ENCODE measurements at regions of chr9 and their contacts with region 1.

Region 1: GRCh38 chr9:83047973-83048772 is 14.8 kb downstream of the RASEF start:
- DNase-seq: no peak

Region 2: DNA sequence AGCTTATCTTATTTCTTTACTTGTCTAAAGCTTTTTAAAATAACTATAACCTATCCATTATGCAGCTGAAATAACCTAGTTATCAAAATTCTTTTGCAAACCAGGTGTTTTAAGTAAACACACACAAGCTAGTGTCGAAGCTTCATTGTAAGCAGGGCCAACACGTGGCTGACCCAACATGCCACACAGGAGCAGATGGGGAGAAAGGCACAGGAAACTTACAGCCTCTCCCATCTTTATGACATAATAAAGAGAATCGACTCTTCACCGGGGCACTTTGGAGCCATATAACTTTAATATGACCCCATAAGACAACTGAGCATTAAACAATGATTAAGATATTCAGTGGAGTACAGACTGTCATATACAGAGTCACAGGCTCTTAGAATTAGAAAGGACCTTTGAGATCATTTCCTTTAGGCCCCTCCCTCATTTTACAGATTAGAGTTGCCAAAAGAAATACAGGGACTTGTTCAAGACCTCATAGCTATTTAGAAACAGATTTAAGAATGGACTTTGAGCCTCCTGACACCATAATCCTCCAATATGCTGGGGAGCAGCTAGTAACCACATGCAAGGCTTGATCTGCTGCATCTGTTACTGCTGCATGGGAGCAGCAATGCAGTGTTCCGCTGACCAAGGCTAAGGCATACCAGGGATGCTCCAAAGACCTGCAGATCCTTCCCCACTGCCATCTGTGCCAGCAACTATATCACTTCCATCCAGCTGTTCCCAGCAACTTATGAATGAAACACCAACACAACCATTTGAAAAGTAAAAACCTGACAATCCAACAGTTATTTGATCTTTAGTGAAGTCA is 60.6 kb before region 1 on chr9:
- intact Hi-C with region 1: loop called (anchors 10 kb)
- DNase-seq: no peak

Region 3: DNA sequence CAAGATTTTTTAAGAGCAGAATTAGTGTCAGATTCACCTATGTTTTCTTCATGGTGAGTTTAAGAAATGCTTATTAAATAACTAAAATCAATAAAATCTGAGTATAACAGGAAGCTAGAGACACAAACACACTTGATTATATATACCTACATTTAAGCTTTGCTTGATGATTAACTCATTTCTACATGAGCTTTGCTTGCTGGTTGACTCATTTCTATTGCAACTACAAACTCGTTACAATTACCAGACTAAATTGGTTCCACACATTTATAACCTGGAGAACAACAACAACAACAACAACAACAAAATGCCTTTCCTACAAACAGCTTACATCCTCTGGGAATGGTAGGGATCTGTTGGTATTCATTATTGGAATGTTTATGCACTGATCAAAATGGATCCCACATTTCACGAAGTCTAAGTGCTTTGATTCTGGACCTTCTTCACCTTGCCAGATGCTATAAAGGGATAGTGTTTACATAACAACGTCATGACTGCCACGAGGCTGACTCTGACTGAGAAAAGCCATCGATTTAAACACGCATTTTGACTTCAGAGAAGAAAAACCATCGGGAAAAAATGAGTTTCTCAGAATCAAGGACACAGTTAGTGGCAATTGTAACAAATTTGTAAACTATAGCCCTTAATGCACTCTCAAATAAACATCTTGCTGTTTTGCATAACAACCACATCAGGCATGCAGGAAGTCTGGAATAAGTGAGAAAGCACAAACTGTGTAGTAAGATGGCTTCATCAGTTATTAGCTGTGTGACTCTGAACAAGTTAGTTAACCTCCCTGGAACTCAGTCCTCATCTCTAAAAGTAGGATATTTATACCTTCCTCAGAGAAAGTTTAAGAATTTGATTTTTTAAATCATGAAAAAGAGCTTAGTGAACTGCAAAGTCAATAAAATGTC is 35.0 kb before region 1 on chr9:
- intact Hi-C with region 1: no loop called
- DNase-seq: no peak